ENCODE measurements at regions of chr5 and their contacts with region 1.

Region 1: DNA sequence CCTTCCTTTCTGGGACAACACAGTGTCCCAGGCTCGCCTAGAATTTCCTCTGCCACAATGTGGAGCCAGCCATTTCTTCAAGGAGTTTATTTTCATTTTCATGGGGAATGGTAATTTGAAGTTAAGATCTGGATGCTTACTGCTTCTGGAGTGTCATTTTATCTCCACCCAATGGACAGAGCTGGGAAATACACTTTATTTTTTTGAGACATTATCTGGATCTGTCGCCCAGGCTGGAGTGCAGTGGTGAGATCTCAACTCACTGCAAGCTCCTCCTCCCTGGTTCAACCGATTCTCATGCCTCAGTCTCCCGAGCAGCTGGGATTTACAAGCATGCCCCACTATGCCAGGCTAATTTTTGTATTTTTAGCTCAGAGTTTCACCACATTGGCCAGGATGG is 12.7 kb upstream of the THG1L start:
- DNase-seq: no peak
- H3K4me3 ChIP-seq: peak overlapping the region in 1 of 4 donors; percentile 22
- H3K27ac ChIP-seq: peak overlapping the region in 1 of 4 donors; percentile 10
- H3K4me1 ChIP-seq: peaks cover 8 to 17% (median 12%) of the 10 kb centered on the region in 4 donors
- H3K27me3 ChIP-seq: no peaks in the 10 kb centered on the region
- CTCF ChIP-seq: peak; percentile 60 to 75 (median 69)
- EP300 ChIP-seq: no peak
- POLR2A ChIP-seq: no peak

Region 2: GRCh38 chr5:157328277-157328912 is 390.1 kb before region 1 on chr5:
- intact Hi-C with region 1: loop called (anchors 5 kb)
- DNase-seq: no peak
- H3K4me3 ChIP-seq: peak overlapping the region; percentile 22 to 30 (median 30)
- H3K27ac ChIP-seq: no peak overlapping the region
- H3K4me1 ChIP-seq: peaks cover 0 to 5% (median 4%) of the 10 kb centered on the region in 4 donors
- H3K27me3 ChIP-seq: no peaks in the 10 kb centered on the region
- CTCF ChIP-seq: peak; percentile 86 to 95 (median 88)
- EP300 ChIP-seq: no peak
- POLR2A ChIP-seq: no peak

Region 3: DNA sequence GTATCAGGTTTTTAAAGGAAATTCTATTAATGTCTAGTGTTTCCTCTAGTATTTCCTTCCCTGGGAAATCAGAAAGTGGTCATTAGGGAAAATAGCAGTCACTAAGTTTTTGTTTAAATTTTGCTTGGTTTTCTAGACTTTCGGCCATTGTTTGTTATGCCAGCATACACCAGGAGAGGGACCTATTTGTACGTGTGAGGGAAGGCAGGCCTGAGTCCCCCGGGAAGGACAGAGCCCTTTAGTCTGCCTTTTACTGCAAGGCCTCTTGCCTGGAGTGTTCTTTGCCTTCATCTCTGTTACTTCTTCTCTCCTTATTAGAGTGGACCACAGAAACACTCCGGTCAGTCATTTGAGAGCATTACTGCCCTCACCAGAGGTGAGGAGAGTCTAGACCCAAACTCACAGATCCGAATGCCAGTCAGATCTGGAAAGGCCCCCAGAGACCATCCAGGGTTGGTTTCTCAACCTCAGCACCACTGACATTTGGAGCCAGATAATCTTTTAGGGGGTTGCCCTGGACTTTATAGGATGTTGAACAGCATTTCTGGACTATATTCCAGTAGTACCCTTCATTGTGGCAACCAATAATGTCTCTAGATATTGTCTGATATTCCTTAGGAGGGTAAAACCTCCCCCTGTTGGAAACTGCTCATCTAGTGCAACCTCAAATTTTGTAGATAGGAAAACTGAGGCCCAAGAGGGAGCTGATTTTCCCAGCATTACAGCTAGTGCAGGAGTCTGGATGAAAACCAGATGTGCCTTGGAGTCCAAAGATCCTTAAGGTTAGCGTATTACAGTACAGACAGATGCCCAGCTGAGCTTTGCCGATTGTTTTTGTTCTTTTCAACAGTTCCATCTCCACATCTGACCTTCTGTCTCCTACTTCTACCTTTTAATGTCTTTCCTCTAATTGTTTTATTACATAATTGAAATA is 351.5 kb before region 1 on chr5:
- intact Hi-C with region 1: loop called (anchors 5 kb)
- DNase-seq: no peak
- H3K4me3 ChIP-seq: no peak overlapping the region
- H3K27ac ChIP-seq: peak overlapping the region; percentile 57 to 85 (median 78)
- H3K4me1 ChIP-seq: peaks cover 1 to 55% (median 43%) of the 10 kb centered on the region in 4 donors
- H3K27me3 ChIP-seq: no peaks in the 10 kb centered on the region
- CTCF ChIP-seq: peak; percentile 66 to 75 (median 73)
- EP300 ChIP-seq: no peak
- POLR2A ChIP-seq: no peak

Region 4: GRCh38 chr5:157431544-157432200 is 286.8 kb before region 1 on chr5:
- intact Hi-C with region 1: loop called (anchors 2 kb)
- DNase-seq: no peak
- H3K4me3 ChIP-seq: no peak overlapping the region
- H3K27ac ChIP-seq: peak overlapping the region in 2 of 4 donors; percentile 8 to 24
- H3K4me1 ChIP-seq: peaks cover 0 to 11% (median 3%) of the 10 kb centered on the region in 4 donors
- H3K27me3 ChIP-seq: no peaks in the 10 kb centered on the region
- CTCF ChIP-seq: peak; percentile 53 to 70 (median 58)
- EP300 ChIP-seq: no peak
- POLR2A ChIP-seq: no peak

Region 5: GRCh38 chr5:157575381-157576020 is 143.0 kb before region 1 on chr5 and contains the start of gene ADAM19:
- intact Hi-C with region 1: loop called (anchors 10 kb)
- DNase-seq: no peak
- H3K4me3 ChIP-seq: peak within 1 kb of the TSS; percentile 78 to 99 (median 88)
- H3K27ac ChIP-seq: peak within 1 kb of the TSS; percentile 93 to 96 (median 94)
- H3K4me1 ChIP-seq: peaks cover 31 to 57% (median 53%) of the 10 kb centered on the region in 4 donors
- H3K27me3 ChIP-seq: peaks cover 0 to 5% (median 0%) of the 10 kb centered on the region in 4 donors
- CTCF ChIP-seq: peak in 1 of 3 experiments; percentile 29
- EP300 ChIP-seq: no peak
- POLR2A ChIP-seq: peak; percentile 73
- total RNA-seq, gene ADAM19: 25.0 to 43.6 (median 28.1) TPM

Region 6: GRCh38 chr5:157670662-157671591 is 47.6 kb before region 1 on chr5 and contains the start of gene C5orf52:
- intact Hi-C with region 1: loop called (anchors 5 kb)
- DNase-seq: peak; percentile 88
- H3K4me3 ChIP-seq: peak within 1 kb of the TSS; percentile 60 to 79 (median 64)
- H3K27ac ChIP-seq: no peak within 1 kb of the TSS
- H3K4me1 ChIP-seq: peaks cover 13 to 16% (median 15%) of the 10 kb centered on the region in 4 donors
- H3K27me3 ChIP-seq: peaks cover 0 to 26% (median 4%) of the 10 kb centered on the region in 4 donors
- CTCF ChIP-seq: no peak
- EP300 ChIP-seq: no peak
- POLR2A ChIP-seq: no peak
- total RNA-seq, gene C5orf52: not detected

Measured in esophagus muscularis mucosa (tissue), 4 donors.